ENCODE measurements at regions of chr11 and their contacts with region 1.

Region 1: DNA sequence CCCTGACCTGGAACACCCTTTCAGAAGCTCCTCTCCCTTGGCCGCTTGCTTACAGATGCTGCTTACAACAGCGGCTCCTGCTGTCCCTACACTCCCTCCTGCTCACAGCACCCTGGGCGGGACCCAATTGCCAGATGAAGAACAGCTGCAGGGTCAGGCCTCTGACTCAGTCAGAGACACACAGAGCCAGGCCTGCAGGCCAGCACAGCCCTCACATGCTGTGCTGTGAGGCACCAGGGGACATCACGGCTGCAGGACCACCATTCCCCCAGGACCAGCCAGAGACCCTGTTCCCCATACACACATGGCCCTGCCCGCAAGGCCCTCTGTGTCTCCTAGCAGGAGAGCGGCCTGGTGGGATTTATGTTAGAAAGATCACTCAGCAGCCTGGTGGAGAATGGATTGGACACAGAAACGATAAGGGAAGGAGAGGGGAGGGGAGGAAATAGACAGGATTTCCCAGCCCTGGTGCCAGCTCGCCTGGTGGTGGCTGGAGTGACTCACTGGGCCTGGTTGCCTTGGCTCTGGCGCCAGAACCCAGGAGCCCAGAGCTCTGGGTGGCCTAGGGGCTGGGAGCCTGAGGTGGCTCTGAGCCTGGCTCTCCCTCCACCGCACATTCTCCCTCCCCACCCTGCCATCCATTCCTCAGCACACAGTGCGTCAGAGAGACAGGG is 6.7 kb downstream of the CAPN5 start:
- DNase-seq: peak; percentile 94
- ATAC-seq: peak; percentile 98
- H3K4me3 ChIP-seq: no peak overlapping the region
- H3K27ac ChIP-seq: peak overlapping the region; percentile 94
- H3K4me1 ChIP-seq: peaks cover 30% of the 10 kb centered on the region
- H3K27me3 ChIP-seq: no peaks in the 10 kb centered on the region
- CTCF ChIP-seq: peak; percentile 58
- POLR2A ChIP-seq: peak; percentile 34; the same call in 1 of the 2 replicates
- RAD21 ChIP-seq: peak; percentile 46

Region 2: GRCh38 chr11:77091146-77091940 is 17.9 kb after region 1 on chr11:
- CTCF ChIA-PET with region 1: interaction called, 12 read pairs
- POLR2A ChIA-PET with region 1: no interaction called
- dilution Hi-C with region 1: no loop called
- in situ Hi-C with region 1: no loop called
- intact Hi-C with region 1: no loop called
- DNase-seq: peak; percentile 65
- ATAC-seq: peak; percentile 99
- H3K4me3 ChIP-seq: no peak overlapping the region
- H3K27ac ChIP-seq: no peak overlapping the region
- H3K4me1 ChIP-seq: no peaks in the 10 kb centered on the region
- H3K27me3 ChIP-seq: no peaks in the 10 kb centered on the region
- CTCF ChIP-seq: peak; percentile 96
- POLR2A ChIP-seq: peak; percentile 50; the same call in 1 of the 2 replicates
- RAD21 ChIP-seq: peak; percentile 94

Measured in IMR-90 (cell line).